CD4-positive, alpha-beta memory T cell (primary cell): ENCODE measurements at regions of chr5 and their contacts with region 1.

Region 1: GRCh38 chr5:140113699-140114263 is at the start of gene PURA:
- DNase-seq: peak; percentile 97 to 98 (median 98)
- H3K4me3 ChIP-seq: peak within 1 kb of the TSS; percentile 76 to 88
- H3K4me3 Mint-ChIP-seq: peak within 1 kb of the TSS; percentile 94 to 100 (median 96)
- H3K27ac ChIP-seq: peak within 1 kb of the TSS; percentile 80
- H3K27ac Mint-ChIP-seq: peak within 1 kb of the TSS; percentile 93 to 98 (median 97)
- H3K4me1 ChIP-seq: peaks cover 79% of the 10 kb centered on the region
- H3K4me1 Mint-ChIP-seq: peaks cover 43 to 81% (median 67%) of the 10 kb centered on the region in 4 donors
- H3K27me3 ChIP-seq: no peaks in the 10 kb centered on the region
- H3K27me3 Mint-ChIP-seq: no peaks in the 10 kb centered on the region
- total RNA-seq, gene PURA: 31.2 to 36.2 TPM

Region 2: DNA sequence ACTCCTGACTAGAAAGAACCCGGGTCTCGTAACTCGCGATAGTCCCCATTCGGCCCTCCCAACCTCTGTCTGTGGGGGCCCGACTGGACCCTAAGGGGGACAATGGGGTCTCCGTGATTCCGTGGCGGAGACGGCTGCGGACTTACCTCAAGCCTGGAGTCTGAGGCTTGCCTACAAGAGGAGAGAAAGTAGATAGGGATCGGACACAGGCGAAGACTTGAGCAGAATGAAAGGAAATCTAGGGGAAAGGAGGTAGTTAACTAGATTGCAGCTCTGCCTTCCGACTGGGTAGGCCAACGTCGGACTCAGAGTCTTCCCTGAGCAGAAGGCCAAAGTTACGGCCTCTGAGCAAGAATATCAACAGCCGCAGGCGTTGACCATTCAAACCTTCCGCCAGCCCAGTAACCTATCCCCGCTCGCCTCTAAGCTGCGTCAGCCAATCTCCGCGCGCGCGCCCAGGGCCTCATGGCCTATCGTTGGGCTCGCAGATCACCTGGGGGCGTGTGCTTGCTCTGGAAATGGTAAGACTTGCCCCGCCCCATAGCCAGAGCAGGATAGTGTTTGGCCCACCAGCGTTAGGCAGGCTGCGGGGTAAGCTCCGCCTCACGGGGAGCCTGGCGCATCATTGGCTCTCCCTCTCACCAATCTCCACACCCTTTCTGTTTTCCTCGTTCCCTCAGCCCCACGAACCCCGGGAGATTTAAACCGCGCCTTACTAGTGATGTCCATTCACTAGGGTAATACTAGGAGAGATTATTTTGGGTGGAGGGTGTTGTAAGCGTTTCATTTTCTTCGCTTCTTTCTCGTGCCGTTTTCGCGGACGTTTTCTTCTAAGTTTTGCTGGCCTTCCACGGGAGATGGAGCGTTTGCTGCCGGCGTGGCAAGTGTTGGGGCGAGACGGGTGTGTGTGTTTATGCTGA is 1782.1 kb before region 1 on chr5 and contains the start of gene CDC25C:
- CTCF ChIA-PET with region 1: no interaction called
- POLR2A ChIA-PET with region 1: no interaction called
- intact Hi-C with region 1: loop called (anchors 10 kb)
- DNase-seq: peak; percentile 94 to 99 (median 97)
- H3K4me3 ChIP-seq: peak within 1 kb of the TSS; percentile 43 to 71
- H3K4me3 Mint-ChIP-seq: peak within 1 kb of the TSS; percentile 77 to 90 (median 88)
- H3K27ac ChIP-seq: peak within 1 kb of the TSS; percentile 20
- H3K27ac Mint-ChIP-seq: peak within 1 kb of the TSS; percentile 36 to 92 (median 77)
- H3K4me1 ChIP-seq: peaks cover 13% of the 10 kb centered on the region
- H3K4me1 Mint-ChIP-seq: peaks cover 5 to 16% (median 11%) of the 10 kb centered on the region in 4 donors
- H3K27me3 ChIP-seq: no peaks in the 10 kb centered on the region
- H3K27me3 Mint-ChIP-seq: no peaks in the 10 kb centered on the region
- total RNA-seq, gene CDC25C: not detected

Region 3: DNA sequence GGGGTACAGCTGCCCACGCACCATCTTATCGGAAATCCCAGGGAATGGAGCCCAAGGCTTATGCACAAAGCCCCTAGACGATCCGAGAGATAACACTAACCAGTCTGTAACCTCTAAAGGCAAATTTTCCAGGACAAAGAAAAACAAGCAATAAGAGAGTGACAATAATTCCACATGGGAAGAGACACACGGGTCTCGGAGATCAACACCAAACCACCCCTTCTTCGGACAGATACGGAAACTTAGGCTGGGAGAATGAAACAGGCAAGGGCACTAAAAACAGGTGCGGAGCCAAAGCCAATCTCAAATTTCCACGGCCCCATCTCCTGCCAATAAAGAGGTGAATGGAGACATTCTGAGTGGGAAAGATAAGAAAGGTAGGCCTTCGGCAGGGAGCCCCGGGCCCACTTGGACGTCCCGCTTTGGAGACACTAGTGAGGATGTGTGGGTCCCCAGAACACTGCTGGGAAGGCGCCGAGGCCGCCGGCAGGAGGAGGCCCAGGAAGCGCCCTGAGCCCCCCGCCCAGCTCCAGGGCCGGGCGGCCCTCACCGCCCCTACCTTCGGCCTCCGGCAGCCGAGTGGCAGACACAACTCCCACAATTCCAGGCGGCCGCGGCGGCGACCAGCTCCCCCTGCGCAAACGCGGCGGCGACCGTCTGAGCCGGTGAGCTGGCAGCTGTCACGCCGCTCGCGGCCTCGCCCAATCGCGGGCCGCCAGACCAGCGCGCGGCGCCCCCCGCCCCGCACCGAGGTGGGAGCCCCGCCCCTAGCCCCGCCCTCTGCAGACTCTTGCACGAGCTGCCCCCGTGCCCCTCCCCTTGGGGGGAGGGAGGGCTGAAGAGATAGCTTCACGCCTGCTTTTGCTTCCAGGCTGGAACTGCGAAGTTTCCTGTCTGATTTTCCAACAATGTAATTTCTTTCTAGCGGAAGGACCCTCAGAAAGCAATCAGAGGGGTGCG is 915.8 kb before region 1 on chr5 and contains the start of gene SIL1:
- CTCF ChIA-PET with region 1: no interaction called
- POLR2A ChIA-PET with region 1: no interaction called
- intact Hi-C with region 1: loop called (anchors 10 kb)
- DNase-seq: peak; percentile 90 to 93 (median 91)
- H3K4me3 ChIP-seq: peak within 1 kb of the TSS; percentile 59 to 69
- H3K4me3 Mint-ChIP-seq: peak within 1 kb of the TSS; percentile 87 to 95 (median 89)
- H3K27ac ChIP-seq: peak within 1 kb of the TSS; percentile 86
- H3K27ac Mint-ChIP-seq: peak within 1 kb of the TSS; percentile 84 to 98 (median 94)
- H3K4me1 ChIP-seq: peaks cover 13% of the 10 kb centered on the region
- H3K4me1 Mint-ChIP-seq: peaks cover 13 to 29% (median 19%) of the 10 kb centered on the region in 4 donors
- H3K27me3 ChIP-seq: no peaks in the 10 kb centered on the region
- H3K27me3 Mint-ChIP-seq: no peaks in the 10 kb centered on the region
- total RNA-seq, gene SIL1: 16.4 to 16.7 TPM

Region 4: DNA sequence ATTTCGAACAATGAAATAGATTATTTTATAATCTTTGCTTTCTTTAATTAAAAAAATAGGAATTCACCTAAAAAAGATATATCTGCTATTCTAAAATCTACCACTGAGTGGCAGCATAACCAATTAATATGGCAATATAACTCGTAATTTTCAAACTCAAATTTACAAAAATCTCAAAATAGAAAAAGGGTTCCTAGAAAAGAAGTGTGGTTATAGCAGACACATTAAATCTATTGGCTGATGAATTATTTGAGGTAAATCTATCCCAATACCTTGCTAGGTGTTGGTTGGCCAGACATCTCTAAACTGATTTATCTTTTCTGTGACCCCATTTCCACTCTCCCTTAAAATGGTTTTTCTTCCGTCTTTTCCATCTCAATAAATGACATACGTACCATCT is 40.5 kb before region 1 on chr5:
- CTCF ChIA-PET with region 1: interaction called, 8 read pairs
- POLR2A ChIA-PET with region 1: interaction called, 3 read pairs
- intact Hi-C with region 1: loop called (anchors 2 kb)
- DNase-seq: peak in 4 of 5 donors; percentile 41 to 53 (median 50)
- H3K4me3 ChIP-seq: no peak overlapping the region
- H3K4me3 Mint-ChIP-seq: no peak overlapping the region
- H3K27ac ChIP-seq: no peak overlapping the region
- H3K27ac Mint-ChIP-seq: no peak overlapping the region
- H3K4me1 ChIP-seq: no peaks in the 10 kb centered on the region
- H3K4me1 Mint-ChIP-seq: no peaks in the 10 kb centered on the region
- H3K27me3 ChIP-seq: peaks cover 7% of the 10 kb centered on the region
- H3K27me3 Mint-ChIP-seq: peaks cover 8 to 13% of the 10 kb centered on the region in 2 donors

Region 5: GRCh38 chr5:140157032-140157803 is 43.4 kb after region 1 on chr5:
- CTCF ChIA-PET with region 1: interaction called, 3 read pairs
- POLR2A ChIA-PET with region 1: interaction called, 3 read pairs
- intact Hi-C with region 1: loop called (anchors 1 kb)
- DNase-seq: peak; percentile 77 to 82 (median 82)
- H3K4me3 ChIP-seq: no peak overlapping the region
- H3K4me3 Mint-ChIP-seq: peak overlapping the region; percentile 52 to 79 (median 60)
- H3K27ac ChIP-seq: no peak overlapping the region
- H3K27ac Mint-ChIP-seq: peak overlapping the region in 6 of 7 donors; percentile 19 to 88 (median 30)
- H3K4me1 ChIP-seq: peaks cover 11% of the 10 kb centered on the region
- H3K4me1 Mint-ChIP-seq: peaks cover 2 to 15% (median 9%) of the 10 kb centered on the region in 4 donors
- H3K27me3 ChIP-seq: no peaks in the 10 kb centered on the region
- H3K27me3 Mint-ChIP-seq: no peaks in the 10 kb centered on the region

Region 6: DNA sequence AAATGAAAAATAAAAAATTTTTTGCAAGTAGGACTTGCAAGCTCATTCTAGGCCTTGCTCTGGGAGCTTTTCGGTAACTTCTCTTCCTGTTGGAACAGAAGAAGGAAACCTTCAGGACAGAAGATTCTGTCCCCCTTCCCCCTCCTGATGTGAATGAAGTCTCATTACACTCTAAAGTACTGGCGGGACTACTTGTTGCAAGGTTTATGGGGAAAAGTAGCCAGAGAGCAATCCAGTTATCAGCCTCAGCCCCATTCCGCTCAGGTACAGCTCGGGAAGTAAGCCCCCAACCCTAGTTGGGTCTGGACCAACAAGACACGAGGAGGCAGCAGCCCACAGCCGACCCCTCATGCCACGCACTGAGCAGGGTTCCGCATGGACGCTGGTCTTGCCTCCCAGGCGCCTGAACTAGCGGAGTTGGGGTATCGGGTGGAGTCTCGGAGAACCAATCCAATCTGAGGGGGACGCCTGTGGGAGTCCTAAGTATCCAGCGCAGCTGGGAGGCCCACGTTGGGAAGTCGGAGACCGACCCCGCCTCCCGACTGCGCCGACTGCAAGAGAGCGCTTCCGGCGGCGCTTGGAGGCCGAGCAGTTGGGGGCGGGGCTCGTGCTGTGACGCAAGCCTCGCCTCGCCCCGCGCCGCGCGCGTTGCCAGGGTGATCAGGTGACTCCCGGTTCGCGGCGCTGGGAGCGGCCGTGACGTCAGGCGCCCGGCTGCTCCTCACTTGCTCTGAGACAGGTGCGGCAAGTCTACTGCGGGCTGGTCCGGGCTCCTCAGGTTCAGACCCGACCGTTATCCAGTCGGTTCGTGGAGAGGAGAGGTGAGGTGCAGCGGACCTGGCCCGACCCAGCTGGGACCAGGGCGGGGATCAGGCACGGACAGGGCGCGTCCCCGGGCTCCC is 60.9 kb after region 1 on chr5 and contains the start of gene CYSTM1:
- CTCF ChIA-PET with region 1: no interaction called
- POLR2A ChIA-PET with region 1: interaction called, 4 read pairs
- intact Hi-C with region 1: loop called (anchors 1 kb)
- DNase-seq: peak; percentile 94 to 98 (median 97)
- H3K4me3 ChIP-seq: peak within 1 kb of the TSS; percentile 74 to 77
- H3K4me3 Mint-ChIP-seq: peak within 1 kb of the TSS; percentile 91 to 97 (median 93)
- H3K27ac ChIP-seq: peak within 1 kb of the TSS; percentile 89
- H3K27ac Mint-ChIP-seq: peak within 1 kb of the TSS; percentile 92 to 99 (median 98)
- H3K4me1 ChIP-seq: peaks cover 12% of the 10 kb centered on the region
- H3K4me1 Mint-ChIP-seq: peaks cover 7 to 23% (median 11%) of the 10 kb centered on the region in 4 donors
- H3K27me3 ChIP-seq: no peaks in the 10 kb centered on the region
- H3K27me3 Mint-ChIP-seq: no peaks in the 10 kb centered on the region
- total RNA-seq, gene CYSTM1: 5.0 to 6.3 TPM